ENCODE measurements at regions of chr1 and their contacts with region 1.

Region 1: DNA sequence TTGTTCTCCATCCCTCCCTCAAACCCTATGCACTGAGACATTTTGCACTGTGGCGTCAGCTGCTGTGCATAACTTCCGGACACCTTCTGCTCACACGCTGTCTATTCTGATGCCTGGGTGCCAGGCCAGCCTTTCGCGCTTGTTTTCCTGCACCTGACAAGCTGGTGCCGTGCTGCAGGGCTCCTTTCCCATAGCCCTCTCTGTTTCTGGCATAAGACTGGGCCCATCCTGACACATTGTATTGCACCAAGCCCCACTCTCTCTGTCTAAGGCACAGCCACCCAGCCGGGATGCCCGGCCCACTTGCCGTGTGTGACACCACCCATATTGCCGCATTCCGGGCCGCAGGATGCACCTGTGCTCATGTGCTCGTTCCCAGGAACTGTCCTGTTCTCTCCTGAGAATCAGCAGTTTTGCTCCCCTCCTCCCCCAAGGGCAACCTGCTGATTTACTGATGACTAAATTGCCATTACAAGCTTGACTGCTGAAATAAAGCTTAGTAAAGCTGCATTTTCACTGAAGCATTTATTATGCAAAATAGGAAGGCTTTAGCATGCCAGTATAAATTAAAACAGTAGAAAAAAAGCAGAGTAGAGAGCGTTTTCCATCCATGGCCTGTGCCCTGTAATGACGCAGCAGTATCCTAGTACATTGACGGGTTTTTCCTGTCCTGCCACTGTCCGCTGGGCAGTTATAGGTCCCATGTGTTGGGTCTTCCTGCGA is 88.0 kb downstream of the CD247 start:
- DNase-seq: peak in 3 of 9 experiments; percentile 17 to 65 (median 50)
- ATAC-seq: peak; percentile 33
- H3K4me3 ChIP-seq: no peak overlapping the region
- H3K4me3 Mint-ChIP-seq: no peak overlapping the region
- H3K27ac ChIP-seq: peak overlapping the region in 1 of 2 experiments; percentile 78
- H3K27ac Mint-ChIP-seq: peak overlapping the region; percentile 87
- H3K4me1 ChIP-seq: peaks cover 17% of the 10 kb centered on the region
- H3K4me1 Mint-ChIP-seq: peaks cover 71% of the 10 kb centered on the region
- H3K27me3 ChIP-seq: no peaks in the 10 kb centered on the region
- H3K27me3 Mint-ChIP-seq: no peaks in the 10 kb centered on the region
- CTCF ChIP-seq: no peak

Region 2: DNA sequence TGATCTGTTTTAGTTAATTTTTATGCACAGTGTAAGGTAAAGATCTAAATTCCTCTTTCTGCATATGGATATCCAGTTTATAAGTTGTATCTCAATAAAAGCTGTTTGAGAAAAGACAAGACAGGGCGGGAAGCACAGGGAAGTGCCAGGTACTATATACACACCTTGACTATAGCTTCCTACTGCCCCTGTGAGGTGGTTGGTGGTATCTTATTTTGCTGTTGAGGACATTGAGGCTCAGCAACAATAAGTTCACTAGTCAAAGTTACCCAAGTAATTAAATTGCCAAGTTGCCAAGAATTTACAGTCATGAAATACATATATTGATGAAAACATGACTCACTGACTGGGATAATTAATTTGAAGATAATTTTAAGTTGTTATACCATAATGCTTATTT is 21.1 kb before region 1 on chr1:
- CTCF ChIA-PET with region 1: interaction called, 3 read pairs
- POLR2A ChIA-PET with region 1: interaction called, 3 read pairs
- intact Hi-C with region 1: loop called in 1 of 2 experiments (anchors 2 kb)
- DNase-seq: peak in 1 of 9 experiments; percentile 36
- ATAC-seq: peak; percentile 57
- H3K4me3 ChIP-seq: no peak overlapping the region
- H3K4me3 Mint-ChIP-seq: no peak overlapping the region
- H3K27ac ChIP-seq: no peak overlapping the region
- H3K27ac Mint-ChIP-seq: no peak overlapping the region
- H3K4me1 ChIP-seq: no peaks in the 10 kb centered on the region
- H3K4me1 Mint-ChIP-seq: peaks cover 3% of the 10 kb centered on the region
- H3K27me3 ChIP-seq: no peaks in the 10 kb centered on the region
- H3K27me3 Mint-ChIP-seq: no peaks in the 10 kb centered on the region
- CTCF ChIP-seq: no peak

Region 3: GRCh38 chr1:167467126-167467710 is 36.9 kb after region 1 on chr1:
- CTCF ChIA-PET with region 1: no interaction called
- POLR2A ChIA-PET with region 1: no interaction called
- intact Hi-C with region 1: no loop called
- DNase-seq: no peak
- ATAC-seq: no peak
- H3K4me3 ChIP-seq: no peak overlapping the region
- H3K4me3 Mint-ChIP-seq: no peak overlapping the region
- H3K27ac ChIP-seq: peak overlapping the region in 1 of 2 experiments; percentile 46
- H3K27ac Mint-ChIP-seq: peak overlapping the region; percentile 55
- H3K4me1 ChIP-seq: peaks cover 72% of the 10 kb centered on the region
- H3K4me1 Mint-ChIP-seq: peaks cover 86% of the 10 kb centered on the region
- H3K27me3 ChIP-seq: no peaks in the 10 kb centered on the region
- H3K27me3 Mint-ChIP-seq: no peaks in the 10 kb centered on the region
- CTCF ChIP-seq: no peak

Region 4: GRCh38 chr1:168863772-168864171 is 1433.5 kb after region 1 on chr1:
- CTCF ChIA-PET with region 1: no interaction called
- POLR2A ChIA-PET with region 1: no interaction called
- intact Hi-C with region 1: no loop called
- DNase-seq: no peak
- ATAC-seq: no peak
- H3K4me3 ChIP-seq: no peak overlapping the region
- H3K4me3 Mint-ChIP-seq: no peak overlapping the region
- H3K27ac ChIP-seq: no peak overlapping the region
- H3K27ac Mint-ChIP-seq: no peak overlapping the region
- H3K4me1 ChIP-seq: no peaks in the 10 kb centered on the region
- H3K4me1 Mint-ChIP-seq: peaks cover 3% of the 10 kb centered on the region
- H3K27me3 ChIP-seq: no peaks in the 10 kb centered on the region
- H3K27me3 Mint-ChIP-seq: no peaks in the 10 kb centered on the region
- CTCF ChIP-seq: no peak

Measured in CD8-positive, alpha-beta T cell (primary cell).